Heart right ventricle (tissue), 16 donors: ENCODE measurements at regions of chr3 and their contacts with region 1.

Region 1: DNA sequence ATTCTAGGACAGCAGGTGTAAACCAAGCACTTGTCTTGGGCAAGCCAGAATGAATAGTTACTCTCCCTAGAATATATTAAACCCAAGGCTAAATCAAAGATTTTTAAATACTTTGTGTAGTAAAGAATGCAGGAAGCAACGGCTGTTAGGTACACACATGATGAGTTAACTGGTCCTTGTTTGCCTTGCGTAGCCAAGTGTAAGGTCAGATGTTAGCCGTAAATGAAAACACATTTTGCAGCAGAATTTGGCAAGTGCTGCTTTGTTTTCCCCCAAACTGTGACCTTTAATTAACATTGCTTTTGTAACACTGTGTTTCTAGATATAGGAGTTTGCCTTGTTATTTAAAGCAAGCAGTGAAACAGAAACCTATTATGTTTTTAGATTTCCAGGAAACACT is 368.7 kb downstream of the IL5RA start:
- DNase-seq: no peak
- ATAC-seq: peak in 1 of 8 donors; percentile 19
- H3K4me3 ChIP-seq: no peak overlapping the region
- H3K27ac ChIP-seq: no peak overlapping the region
- H3K4me1 ChIP-seq: peaks cover 0 to 7% (median 0%) of the 10 kb centered on the region in 9 donors
- H3K27me3 ChIP-seq: no peaks in the 10 kb centered on the region
- CTCF ChIP-seq: no peak

Region 2: GRCh38 chr3:4019501-4019900 is 1278.0 kb after region 1 on chr3:
- intact Hi-C with region 1: loop called in 1 of 10 experiments (anchors 5 kb)
- DNase-seq: no peak
- ATAC-seq: no peak
- H3K4me3 ChIP-seq: no peak overlapping the region
- H3K27ac ChIP-seq: no peak overlapping the region
- H3K4me1 ChIP-seq: no peaks in the 10 kb centered on the region
- H3K27me3 ChIP-seq: no peaks in the 10 kb centered on the region
- CTCF ChIP-seq: no peak